Gastrocnemius medialis (tissue), 4 donors: ENCODE measurements at regions of chr16 and their contacts with region 1.

Region 1: GRCh38 chr16:30984669-30985400 is at the start of gene HSD3B7:
- DNase-seq: peak; percentile 75 to 85
- ATAC-seq: peak; percentile 81 to 87
- H3K4me3 ChIP-seq: peak within 1 kb of the TSS; percentile 50 to 66 (median 55)
- H3K27ac ChIP-seq: peak within 1 kb of the TSS; percentile 69 to 86 (median 78)
- H3K4me1 ChIP-seq: peaks cover 9 to 15% of the 10 kb centered on the region in 2 donors
- H3K27me3 ChIP-seq: no peaks in the 10 kb centered on the region
- CTCF ChIP-seq: peak; percentile 85 to 98 (median 96)
- POLR2A ChIP-seq: no peak
- total RNA-seq, gene HSD3B7: 1.5 to 6.8 (median 5.4) TPM

Region 2: DNA sequence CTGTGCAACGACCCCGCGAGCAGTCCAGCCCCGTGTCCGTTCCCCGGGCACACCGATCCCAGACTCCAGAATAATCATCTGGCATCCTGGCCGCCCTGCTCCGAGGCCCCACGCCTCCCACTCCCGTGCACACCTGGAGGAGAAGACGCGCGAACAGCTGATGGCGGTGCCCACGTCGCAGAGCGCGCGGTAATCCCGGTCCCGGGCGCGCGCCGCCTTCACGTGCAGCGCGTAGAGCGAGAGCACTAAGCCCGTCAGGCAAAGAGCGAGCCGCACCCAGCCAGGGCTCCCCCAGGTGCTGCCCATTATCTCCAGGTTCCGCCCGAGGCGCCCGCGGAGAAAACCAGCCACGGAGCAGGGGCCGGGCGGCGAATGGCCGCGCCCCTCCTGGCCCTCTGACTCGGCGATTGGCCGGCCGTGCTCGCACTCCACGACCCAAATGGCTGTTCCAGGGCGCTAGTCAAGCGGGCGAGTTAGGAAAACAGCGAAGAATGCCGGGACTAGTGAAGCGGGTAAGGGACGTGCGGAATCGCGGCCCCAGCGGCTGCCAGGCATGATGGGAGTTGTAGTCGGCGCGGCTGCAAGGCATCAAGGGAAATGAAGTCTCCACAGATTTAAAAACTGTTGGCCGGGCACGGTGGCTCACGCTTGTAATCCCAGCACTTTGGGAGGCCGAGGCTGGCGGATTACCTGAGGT is 109.7 kb after region 1 on chr16 and contains the start of gene VKORC1:
- in situ Hi-C with region 1: loop called in 1 of 4 experiments (anchors 25 kb)
- intact Hi-C with region 1: loop called (anchors 2 kb)
- DNase-seq: peak; percentile 95 to 96
- ATAC-seq: peak; percentile 94 to 98
- H3K4me3 ChIP-seq: peak within 1 kb of the TSS; percentile 74 to 86 (median 77)
- H3K27ac ChIP-seq: peak within 1 kb of the TSS; percentile 88 to 94 (median 94)
- H3K4me1 ChIP-seq: peaks cover 8 to 13% of the 10 kb centered on the region in 2 donors
- H3K27me3 ChIP-seq: no peaks in the 10 kb centered on the region
- CTCF ChIP-seq: peak in 3 of 5 experiments; percentile 10 to 12 (median 11)
- POLR2A ChIP-seq: peak; percentile 76 to 79
- total RNA-seq, gene VKORC1: 20.1 to 35.9 (median 32.9) TPM

Region 3: GRCh38 chr16:31157136-31157535 is 172.3 kb after region 1 on chr16:
- in situ Hi-C with region 1: loop called in 1 of 4 experiments (anchors 25 kb)
- intact Hi-C with region 1: no loop called
- DNase-seq: no peak
- ATAC-seq: no peak
- H3K4me3 ChIP-seq: no peak overlapping the region
- H3K27ac ChIP-seq: no peak overlapping the region
- H3K4me1 ChIP-seq: no peaks in the 10 kb centered on the region
- H3K27me3 ChIP-seq: no peaks in the 10 kb centered on the region
- CTCF ChIP-seq: no peak
- POLR2A ChIP-seq: no peak

Region 4: DNA sequence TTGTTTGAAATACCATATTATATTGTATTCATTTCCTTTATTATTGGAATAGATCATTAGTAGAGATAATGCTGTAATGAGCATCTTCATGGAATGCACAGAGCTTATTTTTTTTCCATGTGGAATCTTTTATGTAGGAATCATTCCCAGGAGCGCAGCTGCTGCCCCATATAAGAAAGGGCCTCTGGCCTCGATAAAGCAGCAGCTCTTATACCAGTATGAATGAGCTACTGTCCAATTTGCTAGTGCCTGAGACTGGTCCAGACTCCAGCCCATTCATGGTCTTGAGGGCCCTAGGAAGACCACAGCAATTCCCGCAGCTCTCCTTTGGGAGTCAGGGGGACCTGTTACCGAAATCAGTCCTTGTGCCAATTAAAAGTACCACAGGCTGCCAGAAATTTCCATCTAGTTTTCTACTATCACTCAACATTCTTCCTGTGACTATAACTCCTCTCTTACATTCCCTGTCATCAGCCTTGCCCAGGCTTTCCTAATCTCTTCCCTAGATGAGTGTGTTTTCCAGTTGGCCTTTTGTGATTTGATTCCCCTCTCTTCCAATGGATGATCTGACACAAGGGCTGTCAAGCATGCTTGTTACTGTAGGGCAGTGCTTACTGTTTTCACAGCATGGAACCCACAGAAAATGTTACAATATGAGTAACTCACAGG is 455.8 kb after region 1 on chr16:
- in situ Hi-C with region 1: loop called in 2 of 4 experiments (anchors 10 to 25 kb)
- intact Hi-C with region 1: loop called (anchors 2 kb)
- DNase-seq: no peak
- ATAC-seq: no peak
- H3K4me3 ChIP-seq: no peak overlapping the region
- H3K27ac ChIP-seq: peak overlapping the region; percentile 87 to 99 (median 96)
- H3K4me1 ChIP-seq: peaks cover 19 to 21% of the 10 kb centered on the region in 2 donors
- H3K27me3 ChIP-seq: no peaks in the 10 kb centered on the region
- CTCF ChIP-seq: no peak
- POLR2A ChIP-seq: no peak

Region 5: DNA sequence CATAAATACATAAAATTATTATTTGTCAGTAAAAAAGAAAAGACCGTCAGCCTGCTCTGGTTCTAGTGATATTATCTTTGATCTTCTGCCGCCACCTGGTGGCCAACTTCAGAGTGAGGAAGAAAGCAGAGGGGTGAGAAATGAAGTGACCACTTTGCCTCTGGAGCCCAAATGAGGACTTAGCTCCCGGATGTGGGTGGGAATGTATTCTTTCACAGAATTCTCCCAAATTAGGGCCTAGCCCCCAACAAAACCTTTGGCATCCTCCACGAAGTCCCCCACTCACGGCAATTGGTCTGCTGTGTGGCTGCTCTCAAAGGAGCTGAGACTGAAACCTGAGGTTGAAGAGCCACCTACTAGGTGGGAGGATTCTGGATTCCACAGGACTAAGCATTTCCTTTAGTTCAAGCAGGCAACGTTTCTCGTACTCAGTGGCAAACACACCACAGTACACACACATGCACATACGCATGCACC is 883.9 kb after region 1 on chr16:
- in situ Hi-C with region 1: loop called in 3 of 4 experiments (anchors 25 kb)
- intact Hi-C with region 1: loop called (anchors 2 kb)
- DNase-seq: peak; percentile 48 to 66
- ATAC-seq: peak; percentile 69 to 77
- H3K4me3 ChIP-seq: no peak overlapping the region
- H3K27ac ChIP-seq: no peak overlapping the region
- H3K4me1 ChIP-seq: peaks cover 0 to 8% of the 10 kb centered on the region in 2 donors
- H3K27me3 ChIP-seq: no peaks in the 10 kb centered on the region
- CTCF ChIP-seq: peak; percentile 63 to 85 (median 79)
- POLR2A ChIP-seq: no peak